ENCODE measurements at regions of chr5 and their contacts with region 1.

Region 1: GRCh38 chr5:62305715-62306322 is at the start of gene KIF2A:
- DNase-seq: peak; percentile 86 to 94
- H3K4me3 ChIP-seq: peak within 1 kb of the TSS; percentile 95 to 99
- H3K27ac ChIP-seq: peak within 1 kb of the TSS; percentile 86 to 91
- H3K4me1 ChIP-seq: peaks cover 0 to 15% (median 13%) of the 10 kb centered on the region in 4 donors
- H3K27me3 ChIP-seq: no peaks in the 10 kb centered on the region
- CTCF ChIP-seq: peak; percentile 15 to 24

Region 2: DNA sequence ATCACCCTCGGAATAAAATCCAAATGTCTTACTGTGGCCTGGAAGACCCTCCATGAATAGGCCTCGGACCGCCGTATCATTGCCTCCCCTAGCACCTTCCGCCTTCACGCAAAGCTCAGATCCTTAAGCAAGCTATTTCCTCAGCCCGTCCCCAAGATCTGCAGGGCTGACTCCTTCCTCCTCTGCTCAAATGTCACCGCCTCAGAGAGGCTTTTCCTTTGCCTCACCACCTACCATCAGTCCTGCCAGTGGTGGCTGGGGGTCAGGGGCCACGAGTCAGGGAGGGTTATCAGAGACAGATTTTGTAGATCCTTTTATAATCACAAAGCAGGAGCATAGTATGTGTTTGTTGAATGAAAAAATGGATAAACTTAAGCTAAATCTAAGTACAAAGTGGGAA is 74.2 kb before region 1 on chr5:
- intact Hi-C with region 1: loop called (anchors 10 kb)
- DNase-seq: no peak
- H3K4me3 ChIP-seq: no peak overlapping the region
- H3K27ac ChIP-seq: no peak overlapping the region
- H3K4me1 ChIP-seq: peaks cover 0 to 14% (median 8%) of the 10 kb centered on the region in 4 donors
- H3K27me3 ChIP-seq: no peaks in the 10 kb centered on the region
- CTCF ChIP-seq: no peak

Measured in tibial artery (tissue), 4 donors.